ENCODE measurements at regions of chr11 and their contacts with region 1.

Region 1: DNA sequence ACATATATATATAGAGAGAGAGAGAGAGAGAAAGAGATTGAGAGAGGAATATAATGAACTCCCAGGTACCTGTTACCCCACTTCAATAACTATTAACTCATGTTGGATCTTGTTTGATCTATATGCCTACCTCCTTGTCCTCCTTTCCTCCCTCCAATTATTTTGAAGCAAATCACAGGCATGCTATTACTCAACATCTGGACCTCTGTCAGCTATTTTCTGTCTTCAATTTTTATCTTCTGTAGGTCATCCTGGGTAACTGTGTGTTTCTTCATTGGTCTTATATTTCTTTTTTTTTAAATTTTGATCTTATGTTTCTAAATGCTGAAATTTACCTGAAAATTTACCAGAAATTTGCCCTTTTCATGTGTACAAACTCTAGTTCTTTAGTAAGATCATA is 24.8 kb downstream of the UVRAG start:
- DNase-seq: no peak
- H3K4me3 ChIP-seq: no peak overlapping the region
- H3K27ac ChIP-seq: no peak overlapping the region
- H3K4me1 ChIP-seq: no peaks in the 10 kb centered on the region
- H3K27me3 ChIP-seq: no peaks in the 10 kb centered on the region
- CTCF ChIP-seq: no peak

Region 2: DNA sequence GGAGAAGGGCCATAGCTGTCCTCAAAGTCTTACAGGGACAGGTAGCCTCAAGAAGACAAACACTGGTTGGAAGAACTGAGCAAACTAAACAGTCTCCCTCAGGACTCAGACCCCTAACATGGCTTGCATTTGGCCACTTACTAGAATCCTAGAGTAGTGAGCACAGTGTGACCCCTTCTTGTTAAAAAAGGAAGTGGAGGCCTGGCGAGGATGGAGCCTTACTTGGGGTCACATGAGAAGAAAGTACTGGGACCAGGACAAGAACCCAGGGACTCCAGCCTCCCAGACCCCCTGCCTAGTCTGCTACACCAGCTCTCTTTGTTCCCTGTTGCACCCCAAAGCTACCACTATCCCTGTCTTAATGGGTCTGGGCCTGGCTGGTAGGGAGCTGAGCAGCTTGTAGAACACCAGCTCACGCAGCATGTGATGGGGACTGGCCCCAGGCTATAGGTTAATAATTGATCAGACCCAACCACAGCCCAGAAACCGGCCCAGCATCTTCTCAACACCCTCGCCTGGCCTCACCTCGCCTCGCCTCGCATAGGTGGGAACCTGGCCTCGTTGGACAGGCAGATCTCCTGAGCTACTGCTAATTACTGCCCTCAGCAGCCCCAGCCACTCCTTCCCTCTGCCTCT is 53.6 kb before region 1 on chr11:
- CTCF ChIA-PET with region 1: no interaction called
- dilution Hi-C with region 1: loop called (anchors 10 kb)
- in situ Hi-C with region 1: no loop called
- intact Hi-C with region 1: no loop called
- DNase-seq: no peak
- H3K4me3 ChIP-seq: no peak overlapping the region
- H3K27ac ChIP-seq: no peak overlapping the region
- H3K4me1 ChIP-seq: peaks cover 7% of the 10 kb centered on the region
- H3K27me3 ChIP-seq: no peaks in the 10 kb centered on the region
- CTCF ChIP-seq: no peak

Measured in mammary epithelial cell (primary cell).